ENCODE measurements at regions of chr10 and their contacts with region 1.

Region 1: GRCh38 chr10:126459878-126460481 is 71.7 kb upstream of the ADAM12 start:
- DNase-seq: peak; percentile 65
- H3K4me3 ChIP-seq: no peak overlapping the region
- H3K27ac ChIP-seq: no peak overlapping the region
- H3K27me3 ChIP-seq: no peaks in the 10 kb centered on the region
- CTCF ChIP-seq: no peak

Region 2: GRCh38 chr10:126397640-126398382 is 62.2 kb before region 1 on chr10:
- CTCF ChIA-PET with region 1: no interaction called
- POLR2A ChIA-PET with region 1: interaction called, 15 read pairs
- DNase-seq: peak; percentile 90
- H3K4me3 ChIP-seq: no peak overlapping the region
- H3K27ac ChIP-seq: peak overlapping the region; percentile 78
- H3K27me3 ChIP-seq: no peaks in the 10 kb centered on the region
- CTCF ChIP-seq: no peak

Measured in AG04450 (cell line).